Activated naive CD8-positive, alpha-beta T cell treated with anti-CD3 and anti-CD28 coated beads, Interleukin-2, amount 10 ng/mL, durations not matched to agents 7 days and 5 days (primary cell): ENCODE measurements at regions of chr11 and their contacts with region 1.

Region 1: DNA sequence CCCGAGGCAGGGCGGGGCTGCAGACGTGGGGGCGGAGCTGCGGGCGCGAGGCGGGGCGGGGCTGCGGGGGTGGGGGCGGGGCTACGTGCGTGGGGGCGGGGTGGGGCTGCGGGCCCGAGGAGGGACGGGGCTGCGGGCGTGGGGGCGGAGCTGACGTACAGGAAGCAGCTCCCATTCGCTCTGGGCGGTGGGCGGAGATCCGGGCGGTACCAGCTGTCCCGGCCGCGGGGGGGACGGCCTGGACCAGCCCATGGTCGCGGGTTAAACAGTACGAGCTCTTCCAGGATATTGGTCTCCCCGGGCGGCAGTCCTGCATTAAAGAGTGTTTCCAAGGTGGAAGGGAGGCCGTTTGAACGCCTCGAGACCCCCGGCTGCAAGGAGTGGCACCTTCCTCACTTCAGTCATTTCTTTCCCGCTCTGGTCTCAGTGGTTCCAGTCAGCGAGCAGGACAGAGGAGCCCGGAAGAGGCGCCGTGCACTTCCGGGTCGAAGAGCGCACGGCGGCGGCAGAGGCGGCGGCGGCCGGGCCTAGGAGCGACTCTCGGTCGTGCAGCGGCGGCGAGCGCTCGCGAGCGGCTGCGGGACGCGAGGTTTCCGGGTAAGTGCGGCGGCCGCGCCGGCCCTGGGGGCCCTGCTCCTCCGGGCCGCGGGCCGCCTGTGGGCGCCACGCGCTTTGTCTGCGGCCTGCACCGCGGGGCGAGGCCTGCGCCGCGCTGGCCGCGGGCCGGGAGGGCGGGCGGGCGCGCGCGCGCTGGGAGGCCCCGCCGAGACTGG is at the start of gene PHRF1:
- DNase-seq: peak; percentile 96
- ATAC-seq: peak; percentile 85
- H3K4me3 Mint-ChIP-seq: peak within 1 kb of the TSS; percentile 93
- H3K27ac Mint-ChIP-seq: peak within 1 kb of the TSS; percentile 100
- H3K4me1 Mint-ChIP-seq: peaks cover 36% of the 10 kb centered on the region
- H3K27me3 Mint-ChIP-seq: peaks cover 16% of the 10 kb centered on the region
- total RNA-seq, gene PHRF1: 55.4 to 58.9 TPM

Region 2: GRCh38 chr11:560305-561147 is 15.7 kb before region 1 on chr11 and contains the starts of genes LMNTD2 and RASSF7:
- POLR2A ChIA-PET with region 1: interaction called, 15 read pairs
- DNase-seq: peak; percentile 97
- ATAC-seq: peak; percentile 86
- H3K4me3 Mint-ChIP-seq: peak within 1 kb of the TSS; percentile 93
- H3K27ac Mint-ChIP-seq: peak within 1 kb of the TSS; percentile 80
- H3K4me1 Mint-ChIP-seq: peaks cover 13% of the 10 kb centered on the region
- H3K27me3 Mint-ChIP-seq: peaks cover 18% of the 10 kb centered on the region
- total RNA-seq, gene LMNTD2: 2.5 to 2.7 TPM
- total RNA-seq, gene RASSF7: 36.5 to 41.0 TPM

Region 3: DNA sequence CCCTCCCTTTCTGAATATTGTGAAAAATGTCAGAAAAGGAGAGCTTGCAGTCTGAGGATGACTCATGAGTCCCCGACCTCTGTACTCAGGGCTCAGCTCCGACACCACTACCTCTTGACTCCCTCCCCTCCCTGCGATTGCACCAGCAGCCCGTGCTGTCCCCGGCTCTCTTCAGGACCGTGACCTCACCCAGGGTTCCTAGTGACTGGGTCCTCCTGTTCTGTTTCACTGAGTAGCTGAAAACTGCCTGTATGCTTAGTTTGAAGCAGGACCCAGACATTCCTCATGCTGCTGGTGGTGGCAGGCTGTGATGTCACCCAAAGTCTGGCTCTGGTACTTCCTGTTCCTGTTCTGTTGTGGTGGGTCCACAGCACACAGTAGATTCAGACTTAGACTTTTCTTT is 11.8 kb after region 1 on chr11:
- POLR2A ChIA-PET with region 1: interaction called, 28 read pairs
- DNase-seq: peak; percentile 78
- ATAC-seq: peak; percentile 95
- H3K4me3 Mint-ChIP-seq: peak overlapping the region; percentile 86
- H3K27ac Mint-ChIP-seq: peak overlapping the region; percentile 100
- H3K4me1 Mint-ChIP-seq: peaks cover 27% of the 10 kb centered on the region
- H3K27me3 Mint-ChIP-seq: no peaks in the 10 kb centered on the region